ENCODE measurements at regions of chr20 and their contacts with region 1.

Region 1: GRCh38 chr20:18276821-18277220 is 11.5 kb upstream of the ZNF133 start:
- DNase-seq: peak; percentile 77 to 78
- ATAC-seq: peak; percentile 97
- H3K4me3 ChIP-seq: no peak overlapping the region
- H3K27ac ChIP-seq: no peak overlapping the region
- H3K4me1 ChIP-seq: no peaks in the 10 kb centered on the region
- CTCF ChIP-seq: peak; percentile 94
- EP300 ChIP-seq: no peak
- POLR2A ChIP-seq: no peak
- RAD21 ChIP-seq: peak; percentile 93 to 95

Region 2: DNA sequence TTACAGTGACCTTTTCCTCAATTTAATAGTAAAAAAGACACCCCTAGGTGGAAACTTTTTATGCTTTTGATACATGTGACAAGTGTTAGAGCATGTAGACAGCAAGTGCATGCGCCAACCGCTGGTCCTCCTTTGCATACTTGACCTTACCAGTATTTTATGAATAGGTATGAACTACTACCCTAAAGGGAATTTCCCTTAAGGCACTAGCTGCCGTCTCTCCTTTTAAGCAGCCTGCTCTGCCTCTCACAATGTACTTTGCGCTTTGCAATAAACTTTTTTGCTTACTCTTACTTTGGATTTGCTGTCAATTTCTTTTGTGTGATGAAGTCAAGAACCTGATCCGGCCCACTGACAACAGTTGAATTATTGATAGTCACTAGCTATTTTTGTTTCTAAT is 39.1 kb before region 1 on chr20:
- CTCF ChIA-PET with region 1: interaction called, 11 read pairs
- POLR2A ChIA-PET with region 1: no interaction called
- DNase-seq: no peak
- ATAC-seq: no peak
- H3K4me3 ChIP-seq: no peak overlapping the region
- H3K27ac ChIP-seq: no peak overlapping the region
- H3K4me1 ChIP-seq: no peaks in the 10 kb centered on the region
- CTCF ChIP-seq: no peak
- EP300 ChIP-seq: no peak
- POLR2A ChIP-seq: no peak
- RAD21 ChIP-seq: no peak

Region 3: DNA sequence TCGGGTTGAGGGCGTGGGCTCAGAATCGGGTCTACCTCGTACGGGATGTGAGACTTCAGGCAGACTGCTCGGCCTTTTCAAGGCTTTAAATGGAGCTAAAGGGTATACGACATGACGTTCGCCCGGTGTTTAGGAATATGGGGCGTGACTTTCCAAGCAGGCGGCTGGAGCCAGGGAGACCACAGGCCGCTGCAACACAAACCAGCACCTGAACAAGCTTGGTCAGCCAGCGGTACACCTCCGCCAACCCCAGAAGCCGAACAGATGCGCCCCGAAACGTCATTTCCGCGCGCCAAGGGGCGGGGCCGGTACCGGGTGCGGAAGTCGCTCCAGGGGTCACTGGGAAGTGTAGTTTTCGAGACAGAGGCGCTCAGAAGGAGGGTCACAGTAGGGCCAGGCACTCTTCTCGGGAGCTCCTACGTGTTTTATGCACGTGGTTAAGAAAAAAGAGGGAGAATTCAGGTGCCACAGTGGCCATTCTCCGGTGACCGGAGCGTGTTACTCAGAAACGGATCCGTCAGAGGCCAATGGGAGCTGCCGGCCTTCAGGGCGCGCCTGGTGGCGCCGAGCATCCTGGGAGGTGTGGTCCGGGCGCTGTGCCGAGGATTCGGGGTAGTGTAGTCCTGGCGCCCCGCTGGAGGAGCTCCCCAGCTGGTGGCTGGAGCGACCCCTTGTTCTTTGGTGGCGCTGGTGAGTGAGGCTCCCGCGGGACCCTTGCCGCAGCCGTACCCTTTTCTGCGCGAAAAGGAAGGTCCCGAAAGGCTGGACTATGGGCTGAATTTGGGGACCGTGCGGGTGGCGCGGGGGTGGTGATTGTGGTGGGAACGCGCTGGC is 11.3 kb after region 1 on chr20 and contains the start of gene ZNF133:
- CTCF ChIA-PET with region 1: interaction called, 27 read pairs
- POLR2A ChIA-PET with region 1: interaction called, 4 read pairs
- DNase-seq: peak; percentile 96
- ATAC-seq: peak; percentile 98
- H3K4me3 ChIP-seq: peak within 1 kb of the TSS; percentile 81
- H3K27ac ChIP-seq: peak within 1 kb of the TSS; percentile 94 to 95
- H3K4me1 ChIP-seq: peaks cover 10% of the 10 kb centered on the region
- CTCF ChIP-seq: no peak
- EP300 ChIP-seq: no peak
- POLR2A ChIP-seq: peak; percentile 92
- RAD21 ChIP-seq: no peak
- polyA plus RNA-seq, gene ZNF133: 11.6 and 16.6 TPM in 2 replicates